Esophagus squamous epithelium (tissue), 5 donors: ENCODE measurements at regions of chr5 and their contacts with region 1.

Region 1: DNA sequence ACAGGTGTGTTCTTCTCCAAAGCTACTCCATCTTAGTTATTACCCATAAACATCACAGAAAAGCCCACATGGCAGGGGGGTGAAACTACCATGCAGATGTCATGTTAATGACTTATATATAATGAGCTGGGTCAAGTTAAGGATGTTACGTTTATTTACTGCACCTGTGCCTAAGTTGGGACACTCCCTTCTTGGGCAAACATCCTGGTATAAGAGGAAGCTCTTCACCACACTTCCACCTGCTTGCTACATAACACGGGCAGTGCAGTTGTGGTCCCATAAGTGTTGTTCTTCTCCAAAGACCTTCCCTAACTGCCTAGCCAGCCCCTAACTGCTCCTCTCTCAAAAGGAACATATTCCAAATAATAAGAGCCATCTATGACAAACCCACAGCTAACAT is 9.3 kb upstream of the ZCCHC9 start:
- DNase-seq: no peak
- H3K4me3 ChIP-seq: no peak overlapping the region
- H3K27ac ChIP-seq: no peak overlapping the region
- H3K4me1 ChIP-seq: peaks cover 0 to 5% (median 0%) of the 10 kb centered on the region in 3 donors
- H3K27me3 ChIP-seq: no peaks in the 10 kb centered on the region
- CTCF ChIP-seq: no peak
- POLR2A ChIP-seq: no peak

Region 2: DNA sequence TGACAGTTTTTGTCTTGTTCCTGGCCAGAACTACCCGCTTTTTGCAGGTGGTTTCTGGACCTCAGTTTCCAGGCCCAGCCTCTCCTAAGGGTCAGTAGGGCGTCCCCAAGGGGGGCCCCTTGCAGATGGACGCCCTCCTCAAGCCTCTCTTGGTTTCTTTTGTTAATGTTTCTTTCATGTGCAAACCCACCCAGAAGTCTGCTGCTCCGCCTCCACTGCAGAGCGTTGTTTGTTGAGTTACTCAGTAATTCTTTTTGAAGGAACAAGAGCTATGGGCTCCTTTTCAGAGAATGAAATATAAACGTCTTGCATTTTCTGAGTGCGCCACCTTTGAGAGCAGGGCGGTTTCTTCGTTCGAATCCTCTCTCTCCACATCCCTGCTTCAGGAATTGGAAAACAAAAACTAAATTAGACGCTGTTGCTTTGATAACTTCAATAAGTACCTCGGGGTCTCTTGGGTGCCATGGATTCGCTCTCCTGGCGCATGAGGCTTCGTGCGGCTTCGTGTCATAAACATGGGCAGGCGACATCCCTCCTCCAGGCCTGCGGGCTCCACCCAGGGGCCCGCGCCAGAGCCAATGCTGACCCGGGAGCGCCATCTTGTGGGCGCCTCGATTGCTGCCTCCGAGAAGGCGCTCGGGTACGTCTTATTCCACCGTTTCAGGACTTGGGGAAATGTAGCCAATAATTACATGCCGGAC is 97.3 kb before region 1 on chr5:
- intact Hi-C with region 1: loop called (anchors 10 kb)
- DNase-seq: peak; percentile 4
- H3K4me3 ChIP-seq: peak overlapping the region in 1 of 4 donors; percentile 10
- H3K27ac ChIP-seq: no peak overlapping the region
- H3K4me1 ChIP-seq: peaks cover 0 to 11% (median 0%) of the 10 kb centered on the region in 3 donors
- H3K27me3 ChIP-seq: no peaks in the 10 kb centered on the region
- CTCF ChIP-seq: peak; percentile 57 to 86 (median 73)
- POLR2A ChIP-seq: no peak

Region 3: GRCh38 chr5:81694726-81695125 is 402.6 kb after region 1 on chr5:
- intact Hi-C with region 1: no loop called
- DNase-seq: no peak
- H3K4me3 ChIP-seq: no peak overlapping the region
- H3K27ac ChIP-seq: no peak overlapping the region
- H3K4me1 ChIP-seq: no peaks in the 10 kb centered on the region
- H3K27me3 ChIP-seq: no peaks in the 10 kb centered on the region
- CTCF ChIP-seq: no peak
- POLR2A ChIP-seq: no peak